OCI-LY7 (cell line): ENCODE measurements at regions of chr20 and their contacts with region 1.

Region 1: GRCh38 chr20:49278036-49278817 is at the start of gene ZNFX1:
- DNase-seq: peak; percentile 99
- H3K4me3 ChIP-seq: peak within 1 kb of the TSS; percentile 100
- H3K27ac ChIP-seq: peak within 1 kb of the TSS; percentile 90
- H3K4me1 ChIP-seq: peaks cover 50% of the 10 kb centered on the region
- CTCF ChIP-seq: 0 out of 2 replicates have a peak, but pooled peaks have one; percentile 3
- total RNA-seq, gene ZNFX1: 14.9 and 15.1 TPM in 2 replicates

Region 2: GRCh38 chr20:49122920-49123319 is 155.3 kb before region 1 on chr20:
- CTCF ChIA-PET with region 1: no interaction called
- POLR2A ChIA-PET with region 1: no interaction called
- intact Hi-C with region 1: no loop called
- DNase-seq: no peak
- H3K4me3 ChIP-seq: no peak overlapping the region
- H3K27ac ChIP-seq: no peak overlapping the region
- H3K4me1 ChIP-seq: no peaks in the 10 kb centered on the region
- CTCF ChIP-seq: no peak

Region 3: GRCh38 chr20:49187330-49188168 is 90.7 kb before region 1 on chr20:
- CTCF ChIA-PET with region 1: no interaction called
- POLR2A ChIA-PET with region 1: interaction called, 5 read pairs
- intact Hi-C with region 1: loop called (anchors 2 kb)
- DNase-seq: peak; percentile 52
- H3K4me3 ChIP-seq: peak overlapping the region; percentile 75
- H3K27ac ChIP-seq: peak overlapping the region; percentile 47
- H3K4me1 ChIP-seq: peaks cover 30% of the 10 kb centered on the region
- CTCF ChIP-seq: no peak

Region 4: DNA sequence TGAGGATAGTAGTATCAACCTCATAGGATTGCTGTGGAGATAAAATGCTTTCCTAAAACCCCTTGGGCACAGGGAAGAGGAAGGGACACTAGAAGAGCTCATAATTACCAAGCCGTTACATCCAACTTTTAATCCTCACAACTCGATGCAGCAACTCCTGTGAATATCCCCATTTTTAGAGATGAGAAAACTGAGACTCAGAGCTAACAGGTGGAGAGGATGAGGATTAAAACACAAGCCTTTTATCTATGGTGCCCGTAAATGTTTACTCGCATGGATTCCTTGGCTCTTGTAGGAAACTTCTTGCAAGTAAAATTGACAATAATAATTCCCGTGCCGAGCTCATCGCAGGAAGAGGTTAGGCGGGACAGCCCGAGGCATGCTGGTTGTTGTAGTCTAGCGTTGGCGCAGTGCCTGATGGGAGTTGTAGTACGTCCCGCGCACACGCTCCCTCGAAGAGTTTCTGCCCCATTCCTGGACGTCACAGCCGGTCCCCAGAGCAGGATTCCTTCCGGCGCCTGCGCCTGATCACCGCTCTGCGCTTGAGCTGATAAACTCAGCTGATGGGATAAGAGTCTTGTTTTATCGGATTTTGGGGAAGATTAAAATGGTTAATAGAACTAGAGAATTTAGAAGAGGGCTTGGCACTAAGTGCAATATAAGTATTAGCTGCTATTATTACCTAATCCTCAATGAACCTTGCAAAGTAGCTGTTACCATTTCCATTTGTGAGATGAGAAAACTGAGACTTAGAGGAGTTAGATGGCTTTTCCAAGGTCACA is 837.6 kb after region 1 on chr20:
- CTCF ChIA-PET with region 1: no interaction called
- POLR2A ChIA-PET with region 1: no interaction called
- intact Hi-C with region 1: loop called (anchors 10 kb)
- DNase-seq: peak; percentile 93
- H3K4me3 ChIP-seq: peak overlapping the region; percentile 83
- H3K27ac ChIP-seq: peak overlapping the region; percentile 22
- H3K4me1 ChIP-seq: peaks cover 37% of the 10 kb centered on the region
- CTCF ChIP-seq: no peak